Breast epithelium (tissue), 4 donors: ENCODE measurements at regions of chr5 and their contacts with region 1.

Region 1: GRCh38 chr5:129836321-129836720 is 67.9 kb upstream of the CHSY3 start:
- DNase-seq: no peak
- H3K4me3 ChIP-seq: no peak overlapping the region
- H3K27ac ChIP-seq: no peak overlapping the region
- H3K4me1 ChIP-seq: no peaks in the 10 kb centered on the region
- H3K27me3 ChIP-seq: no peaks in the 10 kb centered on the region
- CTCF ChIP-seq: no peak
- POLR2A ChIP-seq: no peak

Region 2: GRCh38 chr5:130868186-130868840 is 1032.0 kb after region 1 on chr5:
- intact Hi-C with region 1: loop called (anchors 5 kb)
- DNase-seq: no peak
- H3K4me3 ChIP-seq: no peak overlapping the region
- H3K27ac ChIP-seq: peak overlapping the region; percentile 19 to 42
- H3K4me1 ChIP-seq: no peaks in the 10 kb centered on the region
- H3K27me3 ChIP-seq: no peaks in the 10 kb centered on the region
- CTCF ChIP-seq: no peak
- POLR2A ChIP-seq: no peak